ENCODE measurements at regions of chr2 and their contacts with region 1.

Region 1: GRCh38 chr2:241514986-241515737 is 6.8 kb upstream of the STK25 start:
- DNase-seq: no peak
- H3K4me3 ChIP-seq: no peak overlapping the region
- H3K27ac ChIP-seq: no peak overlapping the region
- H3K4me1 ChIP-seq: no peaks in the 10 kb centered on the region
- H3K27me3 ChIP-seq: no peaks in the 10 kb centered on the region
- CTCF ChIP-seq: no peak
- POLR2A ChIP-seq: no peak

Region 2: GRCh38 chr2:241609859-241610793 is 95.0 kb after region 1 on chr2:
- intact Hi-C with region 1: loop called (anchors 10 kb)
- DNase-seq: peak; percentile 91 to 93
- H3K4me3 ChIP-seq: peak overlapping the region in 2 of 3 donors; percentile 20 to 50
- H3K27ac ChIP-seq: peak overlapping the region; percentile 58 to 83 (median 63)
- H3K4me1 ChIP-seq: peaks cover 6% of the 10 kb centered on the region in 2 donors
- H3K27me3 ChIP-seq: no peaks in the 10 kb centered on the region
- CTCF ChIP-seq: peak in 5 of 6 experiments; percentile 32 to 80 (median 70)
- POLR2A ChIP-seq: no peak